Activated CD4-positive, alpha-beta T cell treated with anti-CD3 and anti-CD28 coated beads for 36 hours (primary cell): ENCODE measurements at regions of chr10 and their contacts with region 1.

Region 1: DNA sequence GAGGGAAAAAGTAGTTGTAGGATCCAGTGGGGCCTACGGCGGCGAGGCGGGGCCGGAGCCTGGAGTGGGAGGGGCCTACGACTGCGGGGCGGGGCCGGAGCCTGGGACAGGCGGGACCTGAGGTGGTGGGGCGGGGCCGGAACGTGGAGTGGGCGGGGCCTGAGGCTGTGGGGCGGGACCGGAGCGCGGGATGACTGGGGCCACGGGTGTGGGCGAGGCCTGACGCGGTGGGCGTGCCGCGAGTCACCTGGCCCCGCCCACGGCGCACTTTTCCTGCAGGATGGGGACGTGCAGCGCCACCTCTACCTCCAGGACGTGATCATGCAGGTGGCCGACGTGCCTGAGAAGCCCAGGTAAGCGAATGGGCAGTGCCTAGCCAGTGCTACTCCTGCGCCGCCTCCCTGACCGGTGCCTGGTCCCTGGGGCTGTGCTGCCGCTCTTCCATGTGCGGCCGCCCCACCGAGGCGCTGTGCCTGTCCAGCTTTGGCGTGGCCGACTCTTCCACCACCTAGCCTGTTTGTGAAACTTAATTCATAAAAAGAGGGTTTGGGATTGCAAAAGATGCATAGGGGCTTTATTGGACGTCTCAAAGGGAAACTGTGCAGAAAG is 501 bp downstream of the ZNF511 start:
- DNase-seq: peak; percentile 97
- ATAC-seq: peak; percentile 84
- H3K4me3 Mint-ChIP-seq: peak overlapping the region; percentile 100
- H3K27ac Mint-ChIP-seq: peak overlapping the region; percentile 69
- H3K4me1 Mint-ChIP-seq: peaks cover 30% of the 10 kb centered on the region
- H3K27me3 Mint-ChIP-seq: no peaks in the 10 kb centered on the region

Region 2: DNA sequence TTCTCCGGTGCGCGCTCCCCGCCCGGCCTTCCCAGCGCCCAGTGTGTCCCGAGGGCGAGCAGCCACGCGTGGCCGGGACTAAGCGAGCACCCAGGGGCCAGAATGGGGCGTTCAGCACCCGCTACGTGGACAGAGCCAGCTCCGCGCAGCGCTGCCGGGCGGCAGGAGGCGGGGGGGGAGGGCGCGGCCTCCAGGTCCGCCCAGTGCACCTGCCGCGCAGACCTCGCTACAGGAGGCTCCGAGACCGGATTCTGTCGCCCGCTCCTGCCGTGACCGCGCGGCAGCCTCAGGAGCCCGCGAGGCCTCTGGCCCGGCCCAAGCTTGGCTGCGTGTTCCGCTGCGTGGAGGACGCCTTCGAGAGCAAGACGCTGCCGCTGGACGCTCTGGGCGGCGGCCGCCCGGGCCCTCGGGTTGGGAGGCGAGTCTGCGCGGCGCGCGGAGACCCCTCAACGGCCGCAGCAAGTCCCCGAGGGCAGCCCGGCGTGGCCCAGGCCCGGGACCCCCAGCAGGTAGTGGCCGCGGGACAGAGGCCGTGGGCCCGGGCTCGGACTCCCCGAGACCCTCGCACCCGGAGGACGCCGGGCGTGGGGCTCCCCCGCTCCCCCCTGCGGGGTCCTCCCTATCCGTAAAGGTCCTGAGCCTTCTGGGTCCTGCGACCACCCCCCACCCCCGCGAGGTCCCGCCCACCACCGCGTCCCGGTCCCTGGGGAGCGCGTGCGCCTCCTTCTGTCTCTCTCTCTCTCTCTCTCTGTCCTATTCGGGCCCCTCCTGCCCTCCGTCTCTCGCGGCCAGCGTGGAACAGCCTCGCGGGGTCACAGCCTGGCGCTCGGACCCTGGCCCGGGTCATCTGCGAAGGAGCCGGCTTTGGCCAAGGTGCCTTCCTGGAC is 1123.4 kb before region 1 on chr10:
- CTCF ChIA-PET with region 1: no interaction called
- POLR2A ChIA-PET with region 1: no interaction called
- intact Hi-C with region 1: loop called in 1 of 2 experiments (anchors 2 kb)
- DNase-seq: peak; percentile 76
- ATAC-seq: peak; percentile 85
- H3K4me3 Mint-ChIP-seq: no peak overlapping the region
- H3K27ac Mint-ChIP-seq: no peak overlapping the region
- H3K4me1 Mint-ChIP-seq: peaks cover 3% of the 10 kb centered on the region
- H3K27me3 Mint-ChIP-seq: peaks cover 37% of the 10 kb centered on the region

Region 3: GRCh38 chr10:132961787-132962622 is 347.2 kb before region 1 on chr10:
- CTCF ChIA-PET with region 1: no interaction called
- POLR2A ChIA-PET with region 1: no interaction called
- intact Hi-C with region 1: loop called in 1 of 2 experiments (anchors 1 kb)
- DNase-seq: peak; percentile 90
- ATAC-seq: peak; percentile 82
- H3K4me3 Mint-ChIP-seq: peak overlapping the region; percentile 73
- H3K27ac Mint-ChIP-seq: peak overlapping the region; percentile 71
- H3K4me1 Mint-ChIP-seq: peaks cover 26% of the 10 kb centered on the region
- H3K27me3 Mint-ChIP-seq: peaks cover 26% of the 10 kb centered on the region

Region 4: DNA sequence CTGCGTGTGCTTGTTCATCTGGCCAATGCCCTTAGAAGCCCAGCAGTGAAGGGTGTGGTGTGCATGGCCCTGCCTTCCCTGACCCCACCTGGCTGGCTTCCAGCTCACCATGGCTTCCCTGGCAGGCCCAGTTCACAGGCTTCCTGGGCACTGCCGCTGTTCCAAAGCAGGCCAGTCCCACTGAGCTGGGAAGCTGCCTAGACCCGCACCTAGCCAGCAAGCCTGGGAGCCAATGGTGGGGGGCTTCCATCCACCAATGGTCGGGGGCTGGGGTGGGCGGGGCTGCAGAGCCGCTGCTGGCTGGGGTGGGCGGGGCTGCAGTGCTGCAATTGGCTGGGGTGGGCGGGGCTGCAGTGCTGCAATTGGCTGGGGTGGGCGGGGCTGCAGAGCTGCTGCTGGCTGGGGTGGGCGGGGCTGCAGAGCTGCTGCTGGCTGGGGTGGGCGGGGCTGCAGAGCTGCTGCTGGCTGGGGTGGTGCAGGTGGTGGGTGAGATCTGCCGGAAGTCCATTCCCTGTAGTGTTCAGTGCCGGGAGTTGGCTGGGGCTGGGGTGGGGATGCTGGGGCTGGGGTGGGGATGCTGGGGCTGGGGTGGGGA is 15.1 kb after region 1 on chr10:
- CTCF ChIA-PET with region 1: interaction called, 9 read pairs
- POLR2A ChIA-PET with region 1: no interaction called
- intact Hi-C with region 1: loop called in 1 of 2 experiments (anchors 1 kb)
- DNase-seq: peak; percentile 84
- ATAC-seq: peak; percentile 85
- H3K4me3 Mint-ChIP-seq: no peak overlapping the region
- H3K27ac Mint-ChIP-seq: no peak overlapping the region
- H3K4me1 Mint-ChIP-seq: peaks cover 7% of the 10 kb centered on the region
- H3K27me3 Mint-ChIP-seq: peaks cover 26% of the 10 kb centered on the region

Region 5: DNA sequence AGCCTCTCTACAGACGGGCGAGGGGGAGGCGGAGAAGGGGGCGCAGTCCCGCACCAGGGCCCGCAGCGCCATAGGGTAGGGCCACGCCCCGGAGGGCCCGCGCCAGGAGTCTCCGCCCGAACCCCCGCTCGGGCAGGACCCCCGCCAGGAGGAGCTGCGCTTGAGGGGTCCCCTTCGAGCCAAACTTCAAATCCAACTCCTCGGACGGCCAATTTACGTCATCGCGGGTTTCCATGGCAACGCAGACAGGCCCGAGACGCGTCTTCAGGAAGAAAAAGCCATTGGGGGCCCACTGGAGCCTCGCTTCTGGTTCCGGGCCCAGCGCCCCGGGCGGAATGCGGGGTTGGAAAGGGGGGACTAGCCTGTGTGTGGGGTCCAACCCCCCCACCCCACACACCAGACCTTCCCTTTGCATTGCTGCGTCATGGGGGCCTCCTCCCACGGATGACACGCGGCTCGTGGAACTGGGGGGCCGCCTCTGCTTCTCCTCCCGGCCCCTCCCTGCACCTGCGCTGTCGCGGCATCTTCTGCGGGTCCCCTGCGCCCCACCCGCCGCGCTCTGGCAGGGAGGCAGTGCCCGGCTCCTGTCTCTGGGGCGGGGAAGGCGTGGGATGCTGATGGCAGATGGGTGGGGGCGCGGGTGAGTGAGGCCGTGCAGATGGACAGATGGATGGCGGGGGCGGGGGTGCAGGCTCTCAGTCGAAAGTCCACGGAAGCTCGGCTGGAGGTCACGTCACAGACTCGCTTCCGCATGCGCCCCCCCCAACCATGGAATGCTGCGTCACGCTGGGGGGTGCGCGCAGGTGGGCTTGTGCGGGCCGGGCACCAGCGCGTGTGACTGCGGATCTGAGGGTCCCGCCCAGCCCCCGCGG is 26.3 kb after region 1 on chr10:
- CTCF ChIA-PET with region 1: no interaction called
- POLR2A ChIA-PET with region 1: no interaction called
- intact Hi-C with region 1: no loop called
- DNase-seq: peak; percentile 86
- ATAC-seq: peak; percentile 42
- H3K4me3 Mint-ChIP-seq: peak overlapping the region; percentile 32
- H3K27ac Mint-ChIP-seq: no peak overlapping the region
- H3K4me1 Mint-ChIP-seq: peaks cover 5% of the 10 kb centered on the region
- H3K27me3 Mint-ChIP-seq: peaks cover 13% of the 10 kb centered on the region

Region 6: GRCh38 chr10:133378251-133379096 is 69.3 kb after region 1 on chr10:
- CTCF ChIA-PET with region 1: no interaction called
- POLR2A ChIA-PET with region 1: no interaction called
- intact Hi-C with region 1: loop called in 1 of 2 experiments (anchors 1 kb)
- DNase-seq: peak; percentile 77
- ATAC-seq: peak; percentile 57
- H3K4me3 Mint-ChIP-seq: peak overlapping the region; percentile 74
- H3K27ac Mint-ChIP-seq: peak overlapping the region; percentile 24
- H3K4me1 Mint-ChIP-seq: peaks cover 4% of the 10 kb centered on the region
- H3K27me3 Mint-ChIP-seq: no peaks in the 10 kb centered on the region